Endothelial cell of umbilical vein (primary cell): ENCODE measurements at regions of chr4 and their contacts with region 1.

Region 1: DNA sequence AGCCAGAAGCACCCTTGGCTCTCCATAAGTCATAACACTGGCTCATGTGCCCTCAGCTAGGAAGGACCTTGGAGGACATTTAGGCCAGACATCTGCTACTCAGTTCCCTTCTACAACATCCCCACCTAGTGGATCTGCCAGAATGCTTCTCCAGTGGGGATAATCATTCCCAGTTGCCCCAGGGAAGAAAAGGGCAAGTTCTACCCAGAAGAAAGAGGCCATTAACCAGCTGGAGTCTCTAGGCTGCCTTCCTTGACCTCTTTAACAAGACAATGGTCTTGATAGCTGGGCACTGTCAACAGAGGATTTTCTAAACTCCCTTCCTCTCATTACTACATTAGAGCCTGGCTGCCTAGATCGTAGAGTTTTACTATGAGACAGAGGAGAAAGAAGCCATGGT is 42.0 kb downstream of the LGI2 start:
- DNase-seq: peak; percentile 61
- H3K4me3 ChIP-seq: no peak overlapping the region
- H3K27ac ChIP-seq: no peak overlapping the region
- H3K4me1 ChIP-seq: peaks cover 19% of the 10 kb centered on the region
- H3K27me3 ChIP-seq: no peaks in the 10 kb centered on the region
- CTCF ChIP-seq: peak; percentile 63 to 64
- POLR2A ChIP-seq: no peak

Region 2: DNA sequence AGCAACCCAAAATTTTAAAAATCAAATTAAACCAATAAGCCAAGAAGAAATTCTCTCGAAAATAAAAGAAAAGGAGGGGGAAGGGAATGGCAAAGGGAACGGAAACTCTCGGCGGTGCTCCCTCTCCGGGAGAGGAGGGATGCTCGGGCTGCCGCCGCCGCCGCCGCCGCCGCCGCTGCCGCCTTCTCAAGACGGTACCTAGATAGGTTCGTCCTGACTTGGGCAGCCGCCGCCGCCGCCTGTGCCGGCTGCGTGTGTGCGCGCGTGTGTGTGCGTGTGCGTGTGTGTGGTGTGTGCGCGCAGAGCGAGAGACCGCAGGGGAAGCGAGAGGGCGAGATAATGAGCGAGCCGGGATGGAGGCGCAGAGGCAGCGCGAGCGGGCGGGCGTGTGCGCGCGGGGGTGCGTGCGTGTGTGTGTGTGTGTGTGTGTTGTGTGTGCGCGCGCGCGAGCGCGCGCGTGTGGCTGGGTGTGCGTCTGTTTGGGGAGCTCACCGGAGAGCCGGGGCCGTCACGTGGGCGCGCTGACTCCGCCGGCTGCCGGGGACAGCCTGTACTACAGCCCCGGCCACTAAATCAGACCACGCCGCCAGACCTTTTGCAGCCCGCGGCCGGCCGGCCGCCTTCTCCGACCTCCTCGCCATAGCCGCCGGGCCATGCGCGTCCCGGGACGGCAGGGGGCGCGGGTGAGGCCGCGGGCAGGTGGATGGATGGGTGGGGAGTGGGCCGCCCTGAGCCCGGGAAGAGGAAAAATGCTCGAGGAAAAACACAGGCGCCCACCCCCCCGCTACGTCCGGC is 516.1 kb before region 1 on chr4:
- CTCF ChIA-PET with region 1: interaction called, 5 read pairs
- POLR2A ChIA-PET with region 1: no interaction called
- dilution Hi-C with region 1: no loop called
- intact Hi-C with region 1: loop called (anchors 5 kb)
- DNase-seq: peak; percentile 63
- H3K4me3 ChIP-seq: peak overlapping the region; percentile 19 to 42 (median 33)
- H3K27ac ChIP-seq: no peak overlapping the region
- H3K4me1 ChIP-seq: peaks cover 15% of the 10 kb centered on the region
- H3K27me3 ChIP-seq: peaks cover 34 to 42% of the 10 kb centered on the region in 2 experiments
- CTCF ChIP-seq: peak; percentile 79 to 81
- POLR2A ChIP-seq: no peak

Region 3: DNA sequence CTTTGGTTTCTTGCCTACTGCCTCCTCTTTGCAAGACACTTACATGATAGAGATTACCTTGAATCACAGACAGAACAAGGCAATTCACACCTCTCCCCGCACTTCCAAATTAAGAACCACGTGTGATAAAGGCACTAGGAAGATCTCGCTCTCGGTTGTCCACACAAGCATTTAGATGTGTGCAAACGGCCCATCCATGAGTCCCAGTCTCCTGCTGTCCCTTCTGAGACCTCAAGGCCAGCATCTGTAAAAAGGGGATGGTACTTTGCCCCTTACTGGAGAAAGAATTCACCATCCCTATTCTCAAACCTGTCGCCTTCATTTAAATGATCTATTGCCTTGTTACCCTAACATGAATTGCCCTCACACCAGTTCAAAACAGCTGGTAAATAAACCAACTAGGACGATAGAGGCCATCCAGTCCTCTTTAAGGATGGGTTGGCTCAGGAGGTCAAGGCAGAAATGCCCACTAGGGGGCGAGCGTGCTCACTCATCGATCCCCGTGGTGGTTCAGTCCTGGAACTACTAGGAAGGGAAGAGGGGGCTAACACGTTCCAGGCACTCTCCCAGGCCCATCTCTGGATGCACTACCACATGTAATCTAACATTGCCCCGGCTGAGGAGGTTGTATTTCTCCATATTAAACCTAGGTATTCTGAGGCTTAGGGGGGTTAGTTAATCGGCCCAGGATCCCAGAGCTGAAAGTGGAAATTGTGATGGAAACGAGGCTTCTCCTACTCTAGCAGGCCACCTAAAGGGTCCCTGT is 500.2 kb before region 1 on chr4:
- CTCF ChIA-PET with region 1: interaction called, 15 read pairs
- POLR2A ChIA-PET with region 1: no interaction called
- dilution Hi-C with region 1: no loop called
- intact Hi-C with region 1: loop called (anchors 1 kb)
- DNase-seq: peak; percentile 67
- H3K4me3 ChIP-seq: no peak overlapping the region
- H3K27ac ChIP-seq: no peak overlapping the region
- H3K4me1 ChIP-seq: no peaks in the 10 kb centered on the region
- H3K27me3 ChIP-seq: peaks cover 6 to 9% of the 10 kb centered on the region in 2 experiments
- CTCF ChIP-seq: peak; percentile 88 to 90
- POLR2A ChIP-seq: no peak

Region 4: DNA sequence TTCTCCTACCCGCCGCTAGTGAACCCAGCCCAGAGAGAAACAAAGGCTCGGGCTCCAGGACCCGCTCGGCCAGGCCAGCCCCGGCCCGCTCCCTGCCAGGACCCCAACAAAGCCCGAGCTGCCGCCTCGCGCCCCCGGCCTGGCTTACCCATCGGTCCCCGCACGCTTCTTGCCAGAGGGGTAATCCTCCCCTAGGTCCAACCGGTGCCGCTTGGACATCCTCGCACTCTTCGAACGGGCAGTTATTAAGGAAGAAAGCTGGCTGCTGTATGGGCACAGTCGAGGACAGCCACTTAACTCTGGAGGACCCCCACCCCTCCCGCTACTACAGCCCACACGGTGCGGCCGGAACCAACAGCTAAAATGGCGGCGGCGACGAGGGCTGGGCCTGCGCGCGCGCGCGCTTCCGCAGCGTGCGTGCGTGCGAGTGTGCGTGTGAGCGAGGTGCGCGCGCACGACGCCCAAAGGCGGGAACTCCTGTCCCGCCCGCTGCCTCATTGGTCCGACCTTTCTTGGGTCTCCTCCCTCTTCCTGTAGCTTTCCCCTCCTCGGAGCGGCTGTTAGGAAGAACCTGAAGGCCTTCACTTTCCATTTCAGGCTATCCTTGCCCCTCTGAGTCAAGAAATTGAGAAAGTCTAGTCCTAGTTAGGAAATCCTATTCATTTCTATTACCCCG is 404.5 kb before region 1 on chr4 and contains the start of gene DHX15:
- CTCF ChIA-PET with region 1: no interaction called
- POLR2A ChIA-PET with region 1: no interaction called
- dilution Hi-C with region 1: no loop called
- intact Hi-C with region 1: loop called (anchors 5 kb)
- DNase-seq: peak; percentile 97
- H3K4me3 ChIP-seq: peak within 1 kb of the TSS; percentile 82 to 97 (median 92)
- H3K27ac ChIP-seq: peak within 1 kb of the TSS; percentile 79
- H3K4me1 ChIP-seq: peaks cover 18% of the 10 kb centered on the region
- H3K27me3 ChIP-seq: no peaks in the 10 kb centered on the region
- CTCF ChIP-seq: no peak
- POLR2A ChIP-seq: peak; percentile 90
- total RNA-seq, gene DHX15: 148 and 152 TPM in 2 replicates

Region 5: DNA sequence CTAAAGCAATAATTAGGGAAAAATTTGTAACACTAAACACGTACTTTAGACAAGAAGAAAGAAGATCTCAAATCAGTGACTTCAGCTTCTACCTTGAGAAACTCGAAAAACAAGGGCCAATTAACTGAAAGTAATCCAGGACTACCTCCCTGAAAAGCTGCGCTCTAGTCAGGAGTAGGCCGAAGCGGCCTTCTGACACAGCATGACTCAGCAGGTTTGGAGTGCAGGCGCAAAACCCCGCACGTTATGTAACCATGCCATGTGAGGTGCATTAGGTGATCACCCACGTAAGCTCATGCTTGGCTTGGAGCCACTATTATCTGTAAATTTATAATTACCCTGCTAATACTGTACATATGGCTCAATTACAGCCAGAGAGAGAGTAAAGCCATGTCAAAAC is 23.1 kb before region 1 on chr4:
- CTCF ChIA-PET with region 1: no interaction called
- POLR2A ChIA-PET with region 1: no interaction called
- dilution Hi-C with region 1: no loop called
- intact Hi-C with region 1: no loop called
- DNase-seq: no peak
- H3K4me3 ChIP-seq: no peak overlapping the region
- H3K27ac ChIP-seq: no peak overlapping the region
- H3K4me1 ChIP-seq: no peaks in the 10 kb centered on the region
- H3K27me3 ChIP-seq: no peaks in the 10 kb centered on the region
- CTCF ChIP-seq: no peak
- POLR2A ChIP-seq: no peak

Region 6: GRCh38 chr4:24999392-25000089 is 10.8 kb after region 1 on chr4:
- CTCF ChIA-PET with region 1: interaction called, 3 read pairs
- POLR2A ChIA-PET with region 1: no interaction called
- dilution Hi-C with region 1: no loop called
- intact Hi-C with region 1: loop called (anchors 1 kb)
- DNase-seq: no peak
- H3K4me3 ChIP-seq: no peak overlapping the region
- H3K27ac ChIP-seq: no peak overlapping the region
- H3K4me1 ChIP-seq: peaks cover 19% of the 10 kb centered on the region
- H3K27me3 ChIP-seq: no peaks in the 10 kb centered on the region
- CTCF ChIP-seq: no peak
- POLR2A ChIP-seq: no peak

Region 7: DNA sequence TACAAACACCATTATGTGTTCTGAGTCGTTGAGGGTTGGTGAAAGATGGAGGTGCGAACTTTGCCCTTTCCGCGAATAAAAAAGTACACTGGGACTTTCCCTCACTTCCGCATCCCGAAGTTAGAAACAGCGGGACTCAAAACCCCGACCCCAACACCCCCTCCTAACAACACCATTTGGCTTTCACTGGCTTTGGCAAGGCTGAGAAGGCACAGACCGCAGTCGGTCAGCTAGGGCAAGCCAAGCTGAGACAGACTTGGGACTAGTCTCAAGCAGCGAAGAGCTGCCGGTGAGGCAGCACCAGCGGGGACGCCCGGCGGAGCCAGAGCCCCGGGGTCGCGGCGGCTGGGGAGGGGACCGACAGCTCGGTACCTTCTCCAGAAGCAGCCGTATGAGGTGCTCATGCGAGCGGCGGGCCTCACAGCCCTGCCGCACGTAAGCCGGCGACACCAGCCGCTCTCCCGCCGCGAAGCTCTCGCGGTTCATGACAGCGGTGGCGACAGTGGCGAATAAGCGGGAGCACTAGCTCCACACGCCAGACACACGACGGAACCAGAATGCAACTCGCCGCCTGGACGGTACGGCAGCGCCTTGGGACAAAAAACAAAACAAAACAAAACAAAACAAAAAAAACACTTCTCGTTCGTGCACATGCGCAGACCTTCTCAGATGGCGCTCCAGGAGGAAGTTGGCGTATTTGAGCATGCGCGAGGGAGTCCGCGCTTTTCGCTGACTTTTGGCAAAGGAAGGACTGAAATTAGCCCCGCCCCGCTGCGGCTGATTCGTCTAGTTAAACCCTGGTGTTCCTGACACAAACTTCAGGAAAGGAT is 171.3 kb after region 1 on chr4 and contains the start of gene SEPSECS:
- CTCF ChIA-PET with region 1: no interaction called
- POLR2A ChIA-PET with region 1: no interaction called
- dilution Hi-C with region 1: no loop called
- intact Hi-C with region 1: loop called (anchors 1 kb)
- DNase-seq: peak; percentile 99
- H3K4me3 ChIP-seq: peak within 1 kb of the TSS; percentile 39 to 94 (median 84)
- H3K27ac ChIP-seq: peak within 1 kb of the TSS; percentile 81
- H3K4me1 ChIP-seq: peaks cover 7% of the 10 kb centered on the region
- H3K27me3 ChIP-seq: no peaks in the 10 kb centered on the region
- CTCF ChIP-seq: no peak
- POLR2A ChIP-seq: peak; percentile 87
- total RNA-seq, gene SEPSECS: 5.8 and 8.3 TPM in 2 replicates

Region 8: DNA sequence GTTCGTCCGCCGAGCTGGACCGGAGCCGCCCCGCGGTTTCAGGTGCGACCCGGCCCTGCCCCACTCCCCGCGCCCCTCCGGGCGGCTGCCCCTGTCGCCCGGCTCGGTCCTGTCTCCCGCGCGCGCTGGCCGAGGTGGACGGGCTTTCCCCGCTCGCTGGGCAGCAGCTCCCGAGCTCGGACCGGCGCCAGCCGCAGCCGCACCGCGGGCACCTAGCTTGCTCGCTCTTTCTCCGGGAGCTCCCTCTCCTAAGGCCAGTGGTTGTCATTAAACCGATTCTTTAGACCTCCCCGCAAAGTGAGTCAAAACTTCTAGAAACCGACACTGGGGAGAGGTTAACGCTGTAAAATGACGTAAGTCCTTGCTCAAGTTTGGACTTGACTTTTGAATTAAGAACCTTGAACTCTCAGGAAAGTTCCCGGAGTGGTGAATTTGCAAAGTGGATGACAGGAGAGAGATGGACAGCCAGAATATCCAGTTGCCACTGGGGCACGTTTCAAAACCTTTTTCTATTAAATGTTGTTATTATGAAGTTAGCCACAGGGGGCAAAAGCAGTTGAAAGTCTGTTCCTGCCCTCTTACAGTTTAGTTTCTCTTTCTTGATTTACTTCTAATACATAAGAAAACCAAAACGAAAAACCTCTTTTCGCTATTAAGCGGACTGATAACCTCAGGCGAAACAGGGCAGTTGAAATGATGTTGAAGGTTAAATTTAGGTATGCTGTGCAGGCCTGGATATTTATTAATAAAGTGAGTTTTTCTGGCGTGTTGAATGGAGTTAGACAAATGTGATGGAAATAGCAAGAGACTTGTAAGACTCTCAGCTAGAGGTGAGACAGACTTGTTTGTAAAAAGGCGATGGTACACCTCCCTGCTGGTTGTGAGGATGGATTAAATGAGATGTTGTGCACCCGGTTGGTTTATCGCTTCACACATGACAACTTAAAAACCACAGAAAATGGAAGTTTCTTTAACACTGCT is 245.9 kb after region 1 on chr4:
- CTCF ChIA-PET with region 1: no interaction called
- POLR2A ChIA-PET with region 1: no interaction called
- dilution Hi-C with region 1: no loop called
- intact Hi-C with region 1: loop called (anchors 5 kb)
- DNase-seq: peak; percentile 92
- H3K4me3 ChIP-seq: peak overlapping the region; percentile 49 to 77 (median 57)
- H3K27ac ChIP-seq: peak overlapping the region; percentile 62
- H3K4me1 ChIP-seq: peaks cover 8% of the 10 kb centered on the region
- H3K27me3 ChIP-seq: no peaks in the 10 kb centered on the region
- CTCF ChIP-seq: peak; percentile 20 to 37
- POLR2A ChIP-seq: no peak